ENCODE measurements at regions of chr12 and their contacts with region 1.

Region 1: DNA sequence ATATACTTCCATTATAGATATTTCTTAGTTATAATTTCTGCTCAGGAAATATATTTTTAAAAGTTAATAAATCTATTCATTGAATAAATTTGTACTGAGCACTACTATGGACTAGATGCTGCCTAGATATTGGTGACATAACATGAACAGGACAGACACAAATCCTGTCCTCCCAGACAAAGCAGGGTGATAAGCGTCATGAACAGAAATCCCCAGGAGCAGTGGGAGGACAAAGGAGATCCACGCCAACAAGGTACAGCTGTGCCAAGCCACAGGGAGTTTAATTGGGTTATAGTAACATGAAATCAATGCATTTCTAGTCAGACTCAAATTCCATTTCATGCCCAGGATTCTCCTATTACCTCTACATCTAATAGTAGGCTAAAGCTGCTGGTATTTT is 171.8 kb upstream of the CPNE8 start:
- DNase-seq: no peak
- ATAC-seq: no peak
- H3K4me3 ChIP-seq: no peak overlapping the region
- H3K27ac ChIP-seq: no peak overlapping the region
- H3K4me1 ChIP-seq: no peaks in the 10 kb centered on the region
- H3K27me3 ChIP-seq: peaks cover 0 to 3% (median 0%) of the 10 kb centered on the region in 7 donors
- CTCF ChIP-seq: no peak

Region 2: GRCh38 chr12:39127401-39127800 is 50.2 kb after region 1 on chr12:
- intact Hi-C with region 1: loop called in 1 of 10 experiments (anchors 5 kb)
- DNase-seq: no peak
- ATAC-seq: peak in 1 of 8 donors; percentile 60
- H3K4me3 ChIP-seq: no peak overlapping the region
- H3K27ac ChIP-seq: no peak overlapping the region
- H3K4me1 ChIP-seq: no peaks in the 10 kb centered on the region
- H3K27me3 ChIP-seq: peaks cover 0 to 2% (median 0%) of the 10 kb centered on the region in 7 donors
- CTCF ChIP-seq: no peak

Measured in heart right ventricle (tissue), 16 donors.